ENCODE measurements at regions of chr7 and their contacts with region 1.

Region 1: GRCh38 chr7:13032576-13032975 is 345.1 kb downstream of the ARL4A start:
- DNase-seq: no peak
- ATAC-seq: no peak

Region 2: GRCh38 chr7:12674849-12675248 is 357.7 kb before region 1 on chr7:
- intact Hi-C with region 1: loop called (anchors 5 kb)
- DNase-seq: no peak
- ATAC-seq: peak; percentile 38

Region 3: GRCh38 chr7:12929476-12930140 is 103.0 kb before region 1 on chr7:
- intact Hi-C with region 1: no loop called
- DNase-seq: no peak
- ATAC-seq: no peak

Measured in left ventricle myocardium superior (tissue), 1 donor.